ENCODE measurements at regions of chr9 and their contacts with region 1.

Region 1: DNA sequence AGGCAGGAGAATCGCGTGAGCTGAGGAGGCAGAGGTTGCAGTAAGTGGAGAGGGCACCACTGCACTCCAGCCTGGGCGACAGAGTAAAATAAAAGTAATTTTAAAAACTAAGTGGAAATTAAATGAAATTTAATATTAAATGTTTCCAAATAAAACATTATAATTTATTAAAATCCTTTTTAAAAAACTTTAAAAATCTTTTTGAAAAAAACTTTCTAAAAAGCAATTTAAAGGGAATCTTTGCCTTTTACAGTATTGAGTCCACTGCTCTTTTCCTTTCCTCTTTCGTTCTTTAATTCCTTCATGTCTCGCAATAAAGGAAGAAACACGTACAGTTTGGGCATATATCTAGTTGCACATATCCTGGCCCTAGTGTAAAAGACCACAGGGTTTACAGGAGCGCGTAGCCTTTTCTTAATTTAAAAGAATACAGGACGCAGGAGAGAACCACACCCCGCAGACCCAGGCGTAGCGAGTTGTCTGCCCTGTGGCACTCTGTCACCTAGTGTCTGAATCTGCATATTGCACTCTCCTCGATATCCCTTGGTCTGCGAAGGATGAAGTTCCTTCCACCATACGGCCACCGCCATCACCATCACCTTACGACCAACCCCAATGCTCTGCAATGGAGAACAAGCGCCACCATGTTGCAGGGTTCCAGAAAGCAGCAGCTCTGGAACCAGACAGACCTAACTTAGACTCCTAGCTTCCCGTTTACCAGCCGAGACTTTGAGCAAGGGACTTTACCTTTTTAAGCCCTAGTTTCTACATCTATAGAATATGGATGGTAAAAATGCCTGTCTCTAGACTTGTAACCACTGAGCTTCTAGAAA is 77.6 kb upstream of the DMRT1 start:
- DNase-seq: peak; percentile 51 to 71 (median 55)
- H3K4me3 ChIP-seq: peak overlapping the region; percentile 14
- H3K27ac ChIP-seq: no peak overlapping the region
- H3K4me1 ChIP-seq: no peaks in the 10 kb centered on the region
- H3K27me3 ChIP-seq: no peaks in the 10 kb centered on the region
- CTCF ChIP-seq: peak; percentile 65 to 89 (median 86)
- EP300 ChIP-seq: no peak
- POLR2A ChIP-seq: no peak

Region 2: GRCh38 chr9:347667-348292 is 416.1 kb before region 1 on chr9:
- intact Hi-C with region 1: loop called in 1 of 4 experiments (anchors 5 kb)
- DNase-seq: no peak
- H3K4me3 ChIP-seq: no peak overlapping the region
- H3K27ac ChIP-seq: no peak overlapping the region
- H3K4me1 ChIP-seq: peaks cover 4% of the 10 kb centered on the region
- H3K27me3 ChIP-seq: no peaks in the 10 kb centered on the region
- CTCF ChIP-seq: peak; percentile 12 to 76 (median 65)
- EP300 ChIP-seq: no peak
- POLR2A ChIP-seq: no peak

Region 3: GRCh38 chr9:371349-371748 is 392.6 kb before region 1 on chr9:
- intact Hi-C with region 1: loop called in 1 of 4 experiments (anchors 10 kb)
- DNase-seq: no peak
- H3K4me3 ChIP-seq: no peak overlapping the region
- H3K27ac ChIP-seq: no peak overlapping the region
- H3K4me1 ChIP-seq: no peaks in the 10 kb centered on the region
- H3K27me3 ChIP-seq: no peaks in the 10 kb centered on the region
- CTCF ChIP-seq: no peak
- EP300 ChIP-seq: no peak
- POLR2A ChIP-seq: no peak

Region 4: GRCh38 chr9:806285-807156 is 42.6 kb after region 1 on chr9:
- intact Hi-C with region 1: no loop called
- DNase-seq: no peak
- H3K4me3 ChIP-seq: no peak overlapping the region
- H3K27ac ChIP-seq: no peak overlapping the region
- H3K4me1 ChIP-seq: no peaks in the 10 kb centered on the region
- H3K27me3 ChIP-seq: no peaks in the 10 kb centered on the region
- CTCF ChIP-seq: peak; percentile 14 to 38 (median 20)
- EP300 ChIP-seq: no peak
- POLR2A ChIP-seq: no peak

Measured in ovary (tissue), 10 donors.